WTC11 (cell line): ENCODE measurements at regions of chr20 and their contacts with region 1.

Region 1: GRCh38 chr20:1776681-1777475 is 118.3 kb upstream of the SIRPA start:
- DNase-seq: peak; percentile 93
- ATAC-seq: peak; percentile 88
- H3K4me3 Mint-ChIP-seq: peak overlapping the region; percentile 88
- H3K27ac Mint-ChIP-seq: no peak overlapping the region
- H3K4me1 Mint-ChIP-seq: peaks cover 14% of the 10 kb centered on the region
- H3K27me3 Mint-ChIP-seq: peaks cover 3% of the 10 kb centered on the region
- CTCF ChIP-seq: peak; percentile 76; the same call in 1 of the 2 replicates

Region 2: GRCh38 chr20:1466211-1467081 is 310.4 kb before region 1 on chr20 and contains the start of gene NSFL1C:
- CTCF ChIA-PET with region 1: interaction called, 17 read pairs
- POLR2A ChIA-PET with region 1: no interaction called
- DNase-seq: peak; percentile 98
- ATAC-seq: peak; percentile 91
- H3K4me3 Mint-ChIP-seq: peak within 1 kb of the TSS; percentile 85
- H3K27ac Mint-ChIP-seq: peak within 1 kb of the TSS; percentile 53; the same call in 1 of the 2 replicates
- H3K4me1 Mint-ChIP-seq: peaks cover 27% of the 10 kb centered on the region
- H3K27me3 Mint-ChIP-seq: peaks cover 4% of the 10 kb centered on the region
- CTCF ChIP-seq: peak; percentile 91
- total RNA-seq, gene NSFL1C: 76.7 to 85.5 TPM (median 83.2 TPM) in 3 replicates

Region 3: GRCh38 chr20:1509237-1509636 is 267.6 kb before region 1 on chr20:
- CTCF ChIA-PET with region 1: interaction called, 33 read pairs
- POLR2A ChIA-PET with region 1: no interaction called
- DNase-seq: no peak
- ATAC-seq: peak; percentile 81
- H3K4me3 Mint-ChIP-seq: no peak overlapping the region
- H3K27ac Mint-ChIP-seq: no peak overlapping the region
- H3K4me1 Mint-ChIP-seq: no peaks in the 10 kb centered on the region
- H3K27me3 Mint-ChIP-seq: peaks cover 28% of the 10 kb centered on the region
- CTCF ChIP-seq: no peak

Region 4: DNA sequence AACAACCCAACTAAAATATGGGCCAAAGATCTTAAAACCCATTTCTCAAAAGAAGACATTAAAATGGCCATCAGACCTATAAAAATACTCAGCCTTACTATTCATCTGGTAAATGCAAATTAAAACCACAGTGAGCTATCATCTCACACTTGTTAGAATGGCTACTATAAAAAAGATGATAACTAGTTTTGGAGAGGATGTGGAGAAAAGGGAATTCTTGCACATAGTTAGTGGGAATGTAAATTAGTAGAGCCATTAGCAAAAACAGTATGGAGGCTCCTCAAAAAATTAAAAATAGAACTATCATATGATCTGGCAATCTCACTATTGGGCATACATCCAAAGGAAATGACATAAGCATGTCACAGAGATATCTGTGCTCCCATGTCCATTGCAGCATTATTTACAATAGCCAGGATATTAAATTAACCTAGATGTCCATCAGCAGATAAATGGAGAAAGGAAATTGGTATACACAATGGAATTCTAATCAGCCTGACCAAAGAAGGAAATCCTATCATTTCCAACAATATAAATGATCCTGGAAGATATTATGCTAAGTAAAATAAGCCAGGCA is 159.9 kb before region 1 on chr20:
- CTCF ChIA-PET with region 1: no interaction called
- POLR2A ChIA-PET with region 1: no interaction called
- DNase-seq: no peak
- ATAC-seq: no peak
- H3K4me3 Mint-ChIP-seq: no peak overlapping the region
- H3K27ac Mint-ChIP-seq: no peak overlapping the region
- H3K4me1 Mint-ChIP-seq: no peaks in the 10 kb centered on the region
- H3K27me3 Mint-ChIP-seq: peaks cover 8% of the 10 kb centered on the region
- CTCF ChIP-seq: no peak

Region 5: DNA sequence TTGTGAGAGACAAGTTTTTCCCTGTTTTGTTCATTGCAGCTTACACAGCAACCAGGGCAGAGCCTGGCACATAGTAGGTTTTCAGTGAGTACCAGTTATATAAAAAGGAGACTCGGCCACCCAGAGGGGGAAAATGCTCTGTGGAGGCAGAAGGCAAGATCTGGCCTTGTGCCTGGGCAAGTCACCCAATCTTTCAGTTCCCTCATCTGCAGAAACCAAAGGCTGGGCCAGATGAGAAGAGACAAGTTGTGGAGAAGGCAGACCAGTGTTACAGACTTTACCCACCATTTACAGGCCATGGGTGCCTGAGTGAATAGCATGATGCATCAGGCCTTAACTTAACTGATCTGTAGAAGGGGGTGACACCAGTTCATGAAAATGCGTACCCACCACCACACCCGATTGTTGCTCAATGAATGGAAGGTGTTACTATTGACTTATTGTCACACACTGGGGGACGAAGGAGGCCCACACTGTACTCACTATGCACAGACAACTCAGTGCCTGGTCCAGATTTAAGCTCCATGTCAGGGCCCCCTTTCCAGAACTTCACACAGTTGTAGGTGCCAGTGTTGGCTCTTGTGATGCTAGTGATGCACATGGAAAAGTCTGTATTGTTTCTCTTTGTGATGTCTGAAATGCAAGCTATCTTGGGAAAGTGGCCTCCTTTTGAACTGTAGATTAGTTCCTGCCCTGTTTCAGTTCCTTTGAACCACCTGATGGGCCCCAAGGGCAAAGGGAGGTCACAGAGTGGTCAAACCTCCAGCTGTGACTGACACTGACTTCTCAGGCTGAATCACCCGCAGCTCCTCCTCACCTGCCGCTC is 55.0 kb before region 1 on chr20:
- CTCF ChIA-PET with region 1: interaction called, 17 read pairs
- POLR2A ChIA-PET with region 1: no interaction called
- DNase-seq: peak; percentile 67
- ATAC-seq: peak; percentile 92
- H3K4me3 Mint-ChIP-seq: no peak overlapping the region
- H3K27ac Mint-ChIP-seq: no peak overlapping the region
- H3K4me1 Mint-ChIP-seq: peaks cover 27% of the 10 kb centered on the region
- H3K27me3 Mint-ChIP-seq: peaks cover 97% of the 10 kb centered on the region
- CTCF ChIP-seq: no peak

Region 6: DNA sequence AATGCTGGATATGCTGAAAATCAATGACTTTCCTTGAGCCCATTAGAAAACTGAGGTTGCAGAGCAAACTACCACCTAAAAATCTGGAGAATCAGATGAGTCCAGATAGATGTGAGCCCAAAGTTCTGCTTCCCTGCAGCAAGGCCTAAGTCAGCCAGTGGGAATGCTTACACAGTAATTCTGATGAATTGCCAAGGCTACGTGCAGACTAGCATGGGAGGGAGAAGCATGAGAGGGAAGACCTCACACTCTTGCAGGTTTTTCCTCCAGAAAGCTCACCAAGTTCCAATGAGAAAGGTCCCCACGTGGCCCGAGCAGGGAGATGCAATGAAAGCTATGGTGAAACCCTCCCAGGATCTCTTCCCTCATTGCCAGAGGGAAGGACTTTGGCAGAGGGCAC is 13.5 kb after region 1 on chr20:
- CTCF ChIA-PET with region 1: interaction called, 13 read pairs
- POLR2A ChIA-PET with region 1: no interaction called
- DNase-seq: no peak
- ATAC-seq: no peak
- H3K4me3 Mint-ChIP-seq: no peak overlapping the region
- H3K27ac Mint-ChIP-seq: no peak overlapping the region
- H3K4me1 Mint-ChIP-seq: 0 out of 2 replicates have a peak, but pooled peaks cover 3% of the 10 kb centered on the region
- H3K27me3 Mint-ChIP-seq: peaks cover 13% of the 10 kb centered on the region
- CTCF ChIP-seq: no peak

Region 7: DNA sequence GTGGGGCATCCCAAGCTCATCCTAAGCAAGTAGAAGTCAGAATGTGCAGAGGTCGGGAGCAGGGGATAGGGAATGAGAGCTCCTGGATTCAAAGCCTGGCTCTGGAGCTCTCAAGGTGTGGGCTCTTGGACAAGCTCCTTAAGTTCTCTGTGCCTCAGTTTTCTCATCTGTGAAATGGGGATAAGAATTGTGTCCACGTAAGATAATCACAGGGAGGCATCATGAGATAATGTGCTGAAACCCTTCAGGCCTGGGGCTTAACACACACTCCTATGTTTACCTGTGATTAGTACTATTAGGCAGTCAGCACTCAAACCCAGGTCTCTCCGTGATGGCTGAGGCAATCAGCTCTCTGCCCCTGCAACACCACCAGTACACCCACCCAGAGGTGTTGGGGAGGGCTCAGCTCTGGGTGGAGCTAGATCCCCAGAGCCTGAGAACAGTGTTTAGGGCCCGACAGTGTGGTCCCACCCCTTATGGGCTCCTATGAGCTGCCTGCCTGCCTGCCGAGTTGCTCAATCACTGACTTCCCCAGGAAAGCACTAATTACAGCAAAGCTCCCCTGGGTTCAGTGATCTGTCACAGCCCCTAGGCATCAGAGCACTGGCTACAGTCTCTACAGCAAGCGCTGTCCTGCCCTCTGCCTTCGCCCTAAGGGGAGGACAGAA is 112.1 kb after region 1 on chr20:
- CTCF ChIA-PET with region 1: interaction called, 11 read pairs
- POLR2A ChIA-PET with region 1: no interaction called
- DNase-seq: no peak
- ATAC-seq: peak; percentile 29
- H3K4me3 Mint-ChIP-seq: no peak overlapping the region
- H3K27ac Mint-ChIP-seq: no peak overlapping the region
- H3K4me1 Mint-ChIP-seq: peaks cover 30% of the 10 kb centered on the region
- H3K27me3 Mint-ChIP-seq: peaks cover 25% of the 10 kb centered on the region
- CTCF ChIP-seq: no peak